ENCODE measurements at regions of chr2 and their contacts with region 1.

Region 1: DNA sequence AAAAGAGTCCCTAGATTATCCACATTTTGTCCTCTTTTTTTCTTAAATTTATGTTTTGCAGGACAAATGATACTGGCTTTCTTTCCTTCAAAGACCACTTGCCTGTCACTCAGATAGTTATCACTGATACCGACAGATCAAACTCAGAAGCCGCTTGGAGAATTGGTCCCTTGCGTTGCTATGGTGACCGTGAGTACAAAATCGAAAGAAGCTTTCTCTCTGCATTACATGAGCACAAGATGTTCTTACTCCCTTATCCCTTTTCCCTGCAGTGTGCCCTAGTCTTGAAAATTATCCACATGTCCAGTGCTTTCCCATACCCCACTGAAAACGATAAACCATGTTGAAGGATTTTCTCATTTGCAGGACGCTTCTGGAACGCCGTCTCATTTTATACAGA is 738.5 kb downstream of the CNTNAP5 start:
- DNase-seq: no peak
- ATAC-seq: no peak
- H3K4me3 ChIP-seq: no peak overlapping the region
- H3K4me3 Mint-ChIP-seq: no peak overlapping the region
- H3K27ac ChIP-seq: no peak overlapping the region
- H3K27ac Mint-ChIP-seq: no peak overlapping the region
- H3K4me1 ChIP-seq: no peaks in the 10 kb centered on the region
- H3K4me1 Mint-ChIP-seq: no peaks in the 10 kb centered on the region
- H3K27me3 ChIP-seq: no peaks in the 10 kb centered on the region
- H3K27me3 Mint-ChIP-seq: no peaks in the 10 kb centered on the region
- CTCF ChIP-seq: no peak

Region 2: DNA sequence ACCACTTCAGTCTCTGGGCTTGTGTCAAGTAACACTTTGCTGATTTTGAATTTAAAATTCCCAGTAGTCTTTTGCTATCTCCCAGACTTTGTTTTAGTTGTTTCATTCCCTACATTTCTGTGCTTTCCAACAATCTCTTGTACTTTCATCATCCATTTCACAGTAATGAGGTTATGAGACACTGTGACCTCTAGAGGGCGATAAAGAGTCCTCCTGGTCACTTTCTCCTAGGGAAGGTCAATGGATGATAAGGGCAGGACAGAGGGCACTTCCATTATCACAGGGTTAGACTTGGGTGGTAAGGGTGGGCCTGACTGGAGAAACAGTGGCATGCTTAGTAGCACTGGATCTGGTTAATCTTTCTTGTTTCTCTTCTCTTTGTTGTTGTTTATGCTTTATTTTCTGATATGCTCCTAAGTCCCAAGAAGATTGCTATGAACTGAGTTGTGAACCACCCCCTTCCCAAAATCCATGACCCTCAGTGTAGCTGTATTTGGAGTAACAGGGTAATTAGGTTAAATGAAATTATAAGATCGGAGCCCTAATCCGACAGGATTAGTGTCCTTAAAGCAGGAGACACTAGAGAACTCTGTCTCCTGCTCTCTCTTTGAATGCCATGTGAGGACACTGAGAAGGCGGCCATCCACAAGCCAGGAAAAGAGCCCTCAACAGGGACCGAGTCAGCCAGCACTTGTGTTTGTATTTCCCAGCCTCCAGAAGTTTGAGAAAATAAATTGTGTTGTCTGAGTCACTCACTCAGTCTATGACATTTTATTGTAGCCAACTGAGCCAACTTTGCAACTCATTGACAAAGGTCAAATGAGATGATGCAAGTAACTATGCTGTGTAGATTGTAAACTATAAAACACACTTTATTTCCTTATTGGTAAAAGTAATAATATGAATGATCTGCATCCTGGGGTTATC is 40.7 kb after region 1 on chr2:
- CTCF ChIA-PET with region 1: no interaction called
- POLR2A ChIA-PET with region 1: no interaction called
- intact Hi-C with region 1: loop called in 1 of 2 experiments (anchors 1 kb)
- DNase-seq: peak in 2 of 14 experiments; percentile 4 to 6
- ATAC-seq: no peak
- H3K4me3 ChIP-seq: no peak overlapping the region
- H3K4me3 Mint-ChIP-seq: no peak overlapping the region
- H3K27ac ChIP-seq: no peak overlapping the region
- H3K27ac Mint-ChIP-seq: no peak overlapping the region
- H3K4me1 ChIP-seq: no peaks in the 10 kb centered on the region
- H3K4me1 Mint-ChIP-seq: no peaks in the 10 kb centered on the region
- H3K27me3 ChIP-seq: no peaks in the 10 kb centered on the region
- H3K27me3 Mint-ChIP-seq: no peaks in the 10 kb centered on the region
- CTCF ChIP-seq: peak; percentile 26

Measured in CD4-positive, alpha-beta T cell (primary cell).